Heart right ventricle (tissue), 16 donors: ENCODE measurements at regions of chr12 and their contacts with region 1.

Region 1: DNA sequence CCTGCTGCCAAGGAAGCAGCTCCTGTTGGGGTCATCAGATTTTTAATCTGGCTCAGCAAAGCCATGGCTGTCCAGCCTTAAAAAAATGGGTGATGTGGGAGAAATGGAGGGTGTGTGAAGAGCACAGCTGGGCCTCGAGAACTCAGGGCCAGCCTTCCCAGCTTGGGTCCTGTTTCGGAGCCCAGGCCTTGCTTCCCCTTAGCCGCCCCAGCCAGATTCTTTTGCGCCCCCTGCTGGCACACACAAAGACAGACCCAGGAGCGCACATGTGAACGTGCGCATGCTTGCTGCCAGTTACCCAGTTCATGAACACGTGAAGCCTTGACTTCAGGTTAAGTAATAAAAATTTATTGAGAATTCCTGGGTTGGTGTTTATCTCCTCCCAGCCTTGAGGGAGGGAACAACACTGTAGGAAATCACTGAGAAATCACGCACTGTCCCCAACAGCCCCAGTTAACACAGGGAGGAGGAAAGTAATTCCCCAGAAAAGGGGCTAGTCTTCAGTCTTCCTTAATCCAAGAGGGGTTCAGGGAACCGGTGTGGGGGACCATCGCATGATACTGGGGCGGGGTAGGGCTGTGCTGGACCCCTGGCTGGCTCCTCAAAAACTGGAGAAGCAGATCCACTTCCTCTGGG is 5.3 kb downstream of the PHB2 start:
- DNase-seq: peak; percentile 81 to 90
- ATAC-seq: peak; percentile 56 to 83 (median 81)
- H3K4me3 ChIP-seq: no peak overlapping the region
- H3K27ac ChIP-seq: peak overlapping the region in 9 of 10 donors; percentile 3 to 84 (median 74)
- H3K4me1 ChIP-seq: peaks cover 25 to 66% (median 55%) of the 10 kb centered on the region in 9 donors
- H3K27me3 ChIP-seq: no peaks in the 10 kb centered on the region
- CTCF ChIP-seq: peak; percentile 75 to 97 (median 93)

Region 2: DNA sequence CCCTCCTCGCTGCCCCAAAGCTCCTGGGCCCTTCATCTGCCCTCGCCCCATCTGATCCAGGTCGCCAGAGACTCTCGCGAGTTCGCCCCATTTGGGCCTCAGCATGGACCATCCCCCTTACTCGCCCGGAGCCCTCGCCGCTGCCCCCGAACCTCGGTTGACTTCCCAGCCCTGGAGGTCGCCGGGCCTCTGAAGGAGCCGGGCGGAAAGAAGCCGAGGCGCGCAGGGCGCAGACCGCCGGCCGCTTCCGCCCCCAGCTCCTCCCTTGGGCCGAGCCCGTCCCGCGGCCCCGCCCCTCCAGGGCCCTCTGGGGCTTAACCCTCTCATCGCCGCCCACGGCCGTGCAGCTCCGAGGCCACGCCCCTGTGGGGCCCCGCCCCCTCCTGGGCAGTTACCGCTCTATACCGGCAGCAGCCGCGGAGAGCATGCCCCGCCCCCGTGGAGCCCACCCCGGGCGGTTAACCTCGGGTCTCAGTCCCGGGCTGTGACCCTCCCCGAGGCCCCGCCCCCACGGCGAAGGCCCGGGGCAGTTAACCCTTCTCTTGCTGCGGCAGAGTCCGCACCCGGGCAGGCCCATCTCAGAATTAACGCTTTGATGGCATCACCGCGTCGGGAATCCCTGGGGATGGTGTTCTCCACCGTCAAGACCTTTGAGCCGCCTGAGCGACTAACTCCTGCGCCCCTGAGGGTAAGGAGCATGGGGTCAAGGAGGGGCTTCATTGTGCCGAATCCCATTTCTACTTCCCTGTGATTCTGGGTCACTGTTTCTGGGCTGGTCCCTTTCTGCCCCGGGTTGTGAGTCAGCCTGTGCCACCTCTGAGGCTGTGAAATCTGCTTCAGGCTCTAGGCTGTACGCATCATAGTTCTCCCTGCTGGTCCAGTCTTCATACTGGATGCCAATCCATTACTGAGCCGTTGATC is 91.8 kb before region 1 on chr12 and contains the start of gene SPSB2:
- intact Hi-C with region 1: loop called in 2 of 10 experiments (anchors 2 to 5 kb)
- DNase-seq: peak; percentile 97 to 99
- ATAC-seq: peak; percentile 90 to 97 (median 94)
- H3K4me3 ChIP-seq: peak within 1 kb of the TSS; percentile 66 to 95 (median 80)
- H3K27ac ChIP-seq: peak within 1 kb of the TSS; percentile 50 to 91 (median 89)
- H3K4me1 ChIP-seq: peaks cover 24 to 58% (median 45%) of the 10 kb centered on the region in 9 donors
- H3K27me3 ChIP-seq: no peaks in the 10 kb centered on the region
- CTCF ChIP-seq: peak in 2 of 9 donors; percentile 9 to 21
- total RNA-seq, gene SPSB2: 2.0 to 5.6 (median 3.4) TPM

Region 3: GRCh38 chr12:6887460-6887859 is 77.7 kb before region 1 on chr12:
- intact Hi-C with region 1: no loop called
- DNase-seq: no peak
- ATAC-seq: no peak
- H3K4me3 ChIP-seq: no peak overlapping the region
- H3K27ac ChIP-seq: no peak overlapping the region
- H3K4me1 ChIP-seq: peaks cover 0 to 22% (median 11%) of the 10 kb centered on the region in 9 donors
- H3K27me3 ChIP-seq: no peaks in the 10 kb centered on the region
- CTCF ChIP-seq: no peak

Region 4: DNA sequence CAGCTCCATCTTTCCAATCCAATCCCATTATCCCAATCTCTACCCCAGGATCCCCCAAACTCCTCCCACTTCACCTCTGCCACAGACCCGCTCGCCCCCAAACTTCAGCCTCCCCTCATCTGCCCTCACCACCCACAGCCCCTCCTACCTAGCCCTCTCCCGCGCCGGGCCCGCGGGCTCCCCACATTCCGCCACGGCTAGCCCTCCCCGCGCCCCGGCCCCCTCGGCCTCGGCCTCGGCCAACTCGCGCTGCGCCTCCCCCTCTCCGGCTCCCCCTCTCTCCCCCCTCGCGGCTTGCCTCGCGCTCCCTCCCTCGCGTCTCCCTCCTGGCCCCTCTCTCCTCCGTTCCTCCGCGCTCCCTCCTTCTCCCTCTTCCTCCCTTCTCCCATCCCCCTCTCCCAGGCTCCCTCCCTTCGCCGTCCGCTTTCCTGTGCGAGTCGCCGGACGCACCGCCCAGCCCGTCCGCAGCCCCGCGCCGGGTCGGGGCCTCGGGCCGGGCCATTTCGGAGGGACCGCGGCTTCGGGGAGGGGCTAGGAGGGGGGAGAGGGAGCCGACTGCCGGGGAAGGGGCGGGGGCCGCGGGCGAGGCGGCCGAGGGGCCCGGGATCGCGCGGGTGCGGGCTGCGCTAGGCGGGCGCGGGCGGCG is 37.6 kb before region 1 on chr12 and contains the start of gene ATN1:
- intact Hi-C with region 1: loop called in 4 of 10 experiments (anchors 1 to 5 kb)
- DNase-seq: peak; percentile 86 to 91
- ATAC-seq: peak; percentile 31 to 69 (median 52)
- H3K4me3 ChIP-seq: peak within 1 kb of the TSS; percentile 69 to 97 (median 88)
- H3K27ac ChIP-seq: peak within 1 kb of the TSS; percentile 74 to 98 (median 96)
- H3K4me1 ChIP-seq: peaks cover 25 to 81% (median 65%) of the 10 kb centered on the region in 9 donors
- H3K27me3 ChIP-seq: peaks cover 0 to 5% (median 0%) of the 10 kb centered on the region in 7 donors
- CTCF ChIP-seq: no peak
- total RNA-seq, gene ATN1: 54.7 to 96.7 (median 65.8) TPM

Region 5: GRCh38 chr12:7018350-7019042 is 53.4 kb after region 1 on chr12 and contains the start of gene LPCAT3:
- intact Hi-C with region 1: loop called in 8 of 10 experiments (anchors 2 to 10 kb)
- DNase-seq: peak; percentile 97 to 99
- ATAC-seq: peak; percentile 95 to 98 (median 98)
- H3K4me3 ChIP-seq: peak within 1 kb of the TSS; percentile 63 to 93 (median 72)
- H3K27ac ChIP-seq: peak within 1 kb of the TSS; percentile 74 to 97 (median 90)
- H3K4me1 ChIP-seq: peaks cover 0 to 35% (median 21%) of the 10 kb centered on the region in 9 donors
- H3K27me3 ChIP-seq: no peaks in the 10 kb centered on the region
- CTCF ChIP-seq: peak; percentile 85 to 97 (median 90)
- total RNA-seq, gene LPCAT3: 19.9 to 65.8 (median 34.1) TPM